ENCODE measurements at regions of chr12 and their contacts with region 1.

Region 1: DNA sequence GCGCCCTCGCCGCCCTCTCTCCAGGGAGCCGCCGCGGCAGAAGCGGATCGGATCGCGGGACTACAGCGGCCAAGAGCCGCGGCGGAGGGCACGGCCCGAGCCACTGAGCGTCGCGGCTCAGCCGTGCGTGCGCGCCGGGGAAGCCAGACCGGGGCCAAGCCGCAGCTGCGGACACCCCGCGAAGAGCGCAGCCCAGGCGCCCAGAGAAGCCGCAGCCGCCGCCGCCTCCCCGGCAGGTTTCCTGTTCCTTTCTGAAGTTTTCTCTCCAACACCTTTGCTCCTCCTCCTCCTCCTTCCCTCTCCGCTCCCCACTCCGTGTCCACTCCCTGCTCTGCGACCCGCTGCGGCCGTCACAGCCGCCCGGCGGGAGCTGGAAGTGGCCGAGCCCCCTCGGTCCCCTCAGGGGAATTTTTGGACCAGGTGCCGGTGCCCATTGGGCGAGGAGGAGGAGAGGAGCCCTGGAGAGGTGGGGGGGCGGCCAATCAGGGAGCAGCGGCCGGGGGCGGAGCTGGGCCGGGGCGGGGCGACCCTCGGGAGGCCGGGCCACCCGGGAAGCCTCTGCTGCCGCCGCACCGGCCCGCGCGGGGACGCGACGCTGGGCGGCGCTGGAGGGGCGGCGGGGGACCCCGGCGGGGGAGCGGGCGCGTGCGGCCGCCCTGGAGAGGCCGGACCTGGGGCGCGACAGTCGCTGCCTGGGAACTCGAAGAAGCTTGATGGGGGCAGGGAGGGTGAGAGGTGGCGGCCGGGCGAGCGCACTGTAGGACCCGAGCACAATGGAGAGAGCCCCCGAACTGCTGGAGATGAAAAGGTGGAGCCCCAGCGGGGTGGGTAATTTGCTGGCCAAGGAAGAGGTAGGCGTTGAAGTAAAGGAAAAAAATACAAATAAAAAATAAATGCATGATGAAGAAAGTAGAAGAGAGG is at the start of gene ITPR2:
- DNase-seq: peak; percentile 97
- H3K4me3 Mint-ChIP-seq: peak within 1 kb of the TSS; percentile 100
- H3K27ac Mint-ChIP-seq: peak within 1 kb of the TSS; percentile 99
- H3K4me1 Mint-ChIP-seq: peaks cover 41% of the 10 kb centered on the region
- H3K27me3 Mint-ChIP-seq: no peaks in the 10 kb centered on the region
- total RNA-seq, gene ITPR2: 46.0 and 46.2 TPM in 2 replicates

Region 2: DNA sequence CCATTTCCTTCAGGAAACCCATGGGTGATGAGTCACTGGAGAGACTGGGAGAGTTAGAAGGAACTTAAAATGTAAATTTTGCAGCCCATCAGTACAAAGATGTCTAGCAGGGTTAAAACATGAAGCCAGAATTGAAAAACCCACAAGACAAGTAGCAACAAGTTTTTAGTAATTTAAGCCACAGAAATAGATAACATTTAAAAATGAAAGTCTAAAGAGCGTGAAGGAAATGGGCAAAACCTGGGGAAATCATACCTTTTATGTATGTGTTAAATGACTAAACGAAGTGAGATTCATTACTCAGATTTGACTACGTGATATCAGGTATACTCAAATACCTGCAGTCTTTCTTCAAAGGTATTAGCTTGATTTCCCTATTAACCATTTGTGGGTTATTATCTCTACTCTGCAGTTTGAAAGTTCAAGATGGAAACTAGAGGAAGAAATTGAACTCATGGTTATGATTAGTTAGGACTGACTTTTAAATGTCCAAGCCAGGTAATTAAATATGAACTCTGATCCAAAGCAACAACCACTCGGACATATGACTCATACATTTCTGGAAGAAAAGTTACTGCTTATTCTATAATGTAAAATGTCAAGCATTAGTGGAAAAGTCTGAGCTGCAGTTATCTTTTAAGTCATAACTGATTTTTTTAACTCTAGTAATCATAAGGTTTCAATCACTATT is 84.2 kb before region 1 on chr12:
- intact Hi-C with region 1: loop called (anchors 1 kb)
- DNase-seq: no peak
- H3K4me3 Mint-ChIP-seq: peak overlapping the region; percentile 51
- H3K27ac Mint-ChIP-seq: peak overlapping the region; percentile 75
- H3K4me1 Mint-ChIP-seq: peaks cover 50% of the 10 kb centered on the region
- H3K27me3 Mint-ChIP-seq: no peaks in the 10 kb centered on the region

Region 3: GRCh38 chr12:26808766-26809476 is 24.2 kb before region 1 on chr12:
- intact Hi-C with region 1: loop called (anchors 1 kb)
- DNase-seq: no peak
- H3K4me3 Mint-ChIP-seq: no peak overlapping the region
- H3K27ac Mint-ChIP-seq: peak overlapping the region; percentile 52
- H3K4me1 Mint-ChIP-seq: peaks cover 28% of the 10 kb centered on the region
- H3K27me3 Mint-ChIP-seq: no peaks in the 10 kb centered on the region

Region 4: GRCh38 chr12:26853303-26854030 is 20.4 kb after region 1 on chr12:
- intact Hi-C with region 1: loop called (anchors 2 kb)
- DNase-seq: peak; percentile 90
- H3K4me3 Mint-ChIP-seq: no peak overlapping the region
- H3K27ac Mint-ChIP-seq: no peak overlapping the region
- H3K4me1 Mint-ChIP-seq: no peaks in the 10 kb centered on the region
- H3K27me3 Mint-ChIP-seq: peaks cover 10% of the 10 kb centered on the region

Region 5: GRCh38 chr12:26884765-26885576 is 51.9 kb after region 1 on chr12:
- intact Hi-C with region 1: loop called (anchors 10 kb)
- DNase-seq: peak; percentile 96
- H3K4me3 Mint-ChIP-seq: peak overlapping the region; percentile 61
- H3K27ac Mint-ChIP-seq: no peak overlapping the region
- H3K4me1 Mint-ChIP-seq: peaks cover 13% of the 10 kb centered on the region
- H3K27me3 Mint-ChIP-seq: peaks cover 19% of the 10 kb centered on the region

Region 6: DNA sequence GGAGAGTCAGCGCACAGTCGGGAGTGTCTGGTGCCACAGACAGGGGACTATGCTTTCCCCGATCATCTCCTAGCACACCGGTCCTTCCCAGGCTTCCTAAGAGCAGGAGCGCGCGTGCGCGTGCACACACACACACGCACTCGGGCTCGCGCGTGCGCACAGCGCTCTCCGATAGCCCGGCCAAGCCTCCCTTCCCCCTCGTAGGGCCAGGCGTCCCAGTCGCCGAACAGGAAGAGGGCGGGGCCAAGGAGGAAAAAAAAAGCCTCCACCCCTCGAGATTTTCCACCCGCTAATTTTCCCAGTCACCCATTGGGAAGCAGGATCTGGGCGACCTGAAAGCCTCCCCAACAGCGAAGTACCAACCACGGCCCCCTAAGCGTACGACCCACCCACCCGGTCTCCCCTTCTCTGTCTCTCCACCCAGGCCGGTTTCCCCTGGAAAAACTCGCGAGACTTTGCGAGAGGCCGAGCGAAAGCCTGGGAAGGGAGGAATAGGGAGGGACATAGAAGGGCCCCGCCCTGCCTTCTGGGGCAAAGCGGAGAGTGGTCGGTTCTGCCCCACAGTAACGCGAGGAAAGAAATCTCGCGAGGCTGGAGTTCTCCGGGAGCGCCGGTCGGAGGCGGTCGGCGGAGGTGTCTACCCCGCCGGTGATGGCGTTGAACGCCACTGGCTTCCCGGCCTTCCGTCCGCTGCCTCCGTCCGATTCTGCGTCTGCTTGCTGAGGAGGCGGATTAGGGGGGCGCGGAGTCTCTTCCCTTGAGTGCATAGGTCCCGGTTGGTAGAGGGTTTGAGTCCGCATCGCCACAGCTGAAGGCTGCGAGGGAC is 105.0 kb after region 1 on chr12 and contains the starts of genes FGFR1OP2 and INTS13:
- intact Hi-C with region 1: loop called (anchors 1 kb)
- DNase-seq: peak; percentile 99
- H3K4me3 Mint-ChIP-seq: peak within 1 kb of the TSS; percentile 94
- H3K27ac Mint-ChIP-seq: peak within 1 kb of the TSS; percentile 97
- H3K4me1 Mint-ChIP-seq: peaks cover 55% of the 10 kb centered on the region
- H3K27me3 Mint-ChIP-seq: no peaks in the 10 kb centered on the region
- total RNA-seq, gene FGFR1OP2: 45.7 and 46.7 TPM in 2 replicates
- total RNA-seq, gene INTS13: 49.7 and 51.3 TPM in 2 replicates

Region 7: GRCh38 chr12:27710592-27711316 is 877.7 kb after region 1 on chr12 and contains the start of gene MRPS35:
- intact Hi-C with region 1: loop called (anchors 1 kb)
- DNase-seq: peak; percentile 98
- H3K4me3 Mint-ChIP-seq: peak within 1 kb of the TSS; percentile 95
- H3K27ac Mint-ChIP-seq: peak within 1 kb of the TSS; percentile 91
- H3K4me1 Mint-ChIP-seq: peaks cover 31% of the 10 kb centered on the region
- H3K27me3 Mint-ChIP-seq: peaks cover 9% of the 10 kb centered on the region
- total RNA-seq, gene MRPS35: 57.7 and 58.1 TPM in 2 replicates